IMR-90 (cell line): ENCODE measurements at regions of chr12 and their contacts with region 1.

Region 1: GRCh38 chr12:49415521-49415970 is 48.3 kb downstream of the SPATS2 start:
- DNase-seq: no peak
- ATAC-seq: no peak
- H3K4me3 ChIP-seq: no peak overlapping the region
- H3K27ac ChIP-seq: no peak overlapping the region
- H3K4me1 ChIP-seq: peaks cover 3% of the 10 kb centered on the region; the same call in 1 of the 2 replicates
- H3K27me3 ChIP-seq: no peaks in the 10 kb centered on the region
- CTCF ChIP-seq: no peak
- POLR2A ChIP-seq: no peak
- RAD21 ChIP-seq: no peak

Region 2: DNA sequence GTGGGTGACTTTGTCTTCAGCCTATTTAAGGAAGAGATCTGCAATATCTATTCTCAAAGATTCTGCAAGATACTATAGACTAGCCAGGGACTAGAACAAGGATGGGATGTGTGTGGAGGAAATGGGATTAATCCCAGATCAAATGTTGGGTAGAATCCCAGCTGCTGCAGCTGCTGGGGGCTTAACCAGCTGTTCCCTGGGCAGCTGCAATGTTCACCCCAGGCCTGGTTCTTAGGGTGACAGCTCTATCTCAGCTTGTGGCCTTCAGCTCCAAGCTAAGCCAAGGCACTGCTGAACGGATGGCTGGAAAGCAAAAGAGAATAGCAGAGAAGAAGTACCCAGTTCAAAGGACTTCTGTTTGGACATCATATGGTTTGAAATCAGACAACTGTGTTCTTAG is 335.8 kb before region 1 on chr12:
- CTCF ChIA-PET with region 1: no interaction called
- POLR2A ChIA-PET with region 1: no interaction called
- dilution Hi-C with region 1: no loop called
- in situ Hi-C with region 1: no loop called
- intact Hi-C with region 1: no loop called
- DNase-seq: no peak
- ATAC-seq: no peak
- H3K4me3 ChIP-seq: no peak overlapping the region
- H3K27ac ChIP-seq: no peak overlapping the region
- H3K4me1 ChIP-seq: no peaks in the 10 kb centered on the region
- H3K27me3 ChIP-seq: peaks cover 16% of the 10 kb centered on the region
- CTCF ChIP-seq: no peak
- POLR2A ChIP-seq: no peak
- RAD21 ChIP-seq: no peak

Region 3: GRCh38 chr12:49200919-49201594 is 214.5 kb before region 1 on chr12:
- CTCF ChIA-PET with region 1: no interaction called
- POLR2A ChIA-PET with region 1: no interaction called
- dilution Hi-C with region 1: no loop called
- in situ Hi-C with region 1: no loop called
- intact Hi-C with region 1: no loop called
- DNase-seq: peak; percentile 89
- ATAC-seq: peak; percentile 71
- H3K4me3 ChIP-seq: peak overlapping the region; percentile 40; the same call in 1 of the 2 replicates
- H3K27ac ChIP-seq: peak overlapping the region; percentile 56; the same call in 1 of the 2 replicates
- H3K4me1 ChIP-seq: peaks cover 8% of the 10 kb centered on the region
- H3K27me3 ChIP-seq: no peaks in the 10 kb centered on the region
- CTCF ChIP-seq: no peak
- POLR2A ChIP-seq: 0 out of 2 replicates have a peak, but pooled peaks have one; percentile 7
- RAD21 ChIP-seq: no peak

Region 4: DNA sequence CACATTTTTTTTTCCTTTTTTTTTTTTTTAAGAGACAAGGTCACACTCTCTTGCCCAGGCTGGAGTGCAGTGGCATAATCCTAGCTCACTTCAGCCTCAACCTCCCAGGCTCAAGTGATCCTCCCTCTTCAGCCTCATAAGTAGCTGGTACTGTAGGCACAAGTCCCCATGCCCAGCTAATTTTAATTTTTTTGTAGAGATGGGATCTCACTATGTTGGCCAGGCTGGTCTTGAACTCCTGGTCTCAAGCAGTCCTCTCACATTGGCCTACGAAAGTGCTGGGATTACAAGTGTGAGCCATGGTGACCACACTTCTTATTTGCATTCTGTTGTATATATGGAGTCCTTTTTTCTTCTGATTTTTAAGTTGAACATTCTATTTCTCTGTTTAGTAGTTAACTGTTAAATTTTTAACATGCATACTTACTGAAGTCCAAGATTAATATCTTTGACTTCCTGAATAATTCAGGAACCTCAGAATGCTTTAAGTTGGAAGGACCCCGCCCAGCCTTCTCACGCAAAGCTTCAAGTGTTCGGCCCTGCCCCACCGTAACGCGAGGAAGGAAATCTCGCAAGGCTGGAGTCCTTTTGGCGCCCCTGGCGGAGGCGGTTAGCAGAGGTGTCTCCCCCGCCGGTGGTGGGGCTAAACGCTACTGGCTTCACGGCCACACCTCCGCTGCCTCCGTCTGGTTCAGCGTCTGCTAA is 26.7 kb before region 1 on chr12:
- CTCF ChIA-PET with region 1: no interaction called
- POLR2A ChIA-PET with region 1: no interaction called
- dilution Hi-C with region 1: no loop called
- in situ Hi-C with region 1: no loop called
- intact Hi-C with region 1: loop called (anchors 5 kb)
- DNase-seq: no peak
- ATAC-seq: no peak
- H3K4me3 ChIP-seq: no peak overlapping the region
- H3K27ac ChIP-seq: no peak overlapping the region
- H3K4me1 ChIP-seq: no peaks in the 10 kb centered on the region
- H3K27me3 ChIP-seq: no peaks in the 10 kb centered on the region
- CTCF ChIP-seq: no peak
- POLR2A ChIP-seq: no peak
- RAD21 ChIP-seq: no peak